CD14-positive monocyte (primary cell): ENCODE measurements at regions of chr9 and their contacts with region 1.

Region 1: DNA sequence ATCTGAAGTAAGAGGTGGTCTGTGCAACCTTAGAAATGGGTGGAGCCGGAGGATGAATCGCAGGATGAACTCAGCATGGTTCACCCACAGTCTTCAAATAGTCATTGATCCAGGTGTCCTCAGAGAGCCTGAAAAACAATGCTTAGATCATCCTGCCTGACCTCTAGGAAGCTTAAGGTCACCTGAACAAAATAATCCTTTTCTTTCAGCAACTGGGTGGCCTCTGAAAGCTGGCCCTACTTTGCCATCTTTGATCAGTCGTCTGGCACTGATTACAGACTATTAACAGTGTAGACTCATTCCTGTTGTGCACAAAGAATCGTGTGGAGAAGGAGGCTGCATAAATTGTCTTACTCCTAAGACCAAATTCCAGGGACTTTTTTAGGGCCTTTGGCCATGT is 50.7 kb downstream of the PIP5K1B start:
- DNase-seq: no peak
- H3K4me3 ChIP-seq: no peak overlapping the region
- H3K4me3 Mint-ChIP-seq: no peak overlapping the region
- H3K27ac ChIP-seq: no peak overlapping the region
- H3K27ac Mint-ChIP-seq: no peak overlapping the region
- H3K4me1 ChIP-seq: no peaks in the 10 kb centered on the region
- H3K4me1 Mint-ChIP-seq: no peaks in the 10 kb centered on the region
- H3K27me3 ChIP-seq: no peaks in the 10 kb centered on the region
- H3K27me3 Mint-ChIP-seq: no peaks in the 10 kb centered on the region
- CTCF ChIP-seq: no peak

Region 2: GRCh38 chr9:68802525-68803015 is 46.8 kb after region 1 on chr9:
- intact Hi-C with region 1: loop called in 1 of 2 experiments (anchors 5 kb)
- DNase-seq: no peak
- H3K4me3 ChIP-seq: no peak overlapping the region
- H3K4me3 Mint-ChIP-seq: no peak overlapping the region
- H3K27ac ChIP-seq: no peak overlapping the region
- H3K27ac Mint-ChIP-seq: no peak overlapping the region
- H3K4me1 ChIP-seq: peaks cover 4% of the 10 kb centered on the region in 2 donors
- H3K4me1 Mint-ChIP-seq: peaks cover 19% of the 10 kb centered on the region
- H3K27me3 ChIP-seq: no peaks in the 10 kb centered on the region
- H3K27me3 Mint-ChIP-seq: peaks cover 0 to 1% (median 1%) of the 10 kb centered on the region in 3 donors
- CTCF ChIP-seq: no peak